ENCODE measurements at regions of chr3 and their contacts with region 1.

Region 1: GRCh38 chr3:136752422-136753325 is 496 bp upstream of the STAG1 start:
- DNase-seq: peak; percentile 98 to 99 (median 99)
- H3K4me3 ChIP-seq: peak overlapping the region; percentile 5 to 93 (median 52)
- H3K27ac ChIP-seq: peak overlapping the region; percentile 93 to 100 (median 100)
- H3K4me1 ChIP-seq: peaks cover 7 to 29% of the 10 kb centered on the region in 2 donors
- H3K27me3 ChIP-seq: no peaks in the 10 kb centered on the region
- CTCF ChIP-seq: peak in 2 of 6 experiments; percentile 17 to 36
- POLR2A ChIP-seq: peak; percentile 93 to 97

Region 2: DNA sequence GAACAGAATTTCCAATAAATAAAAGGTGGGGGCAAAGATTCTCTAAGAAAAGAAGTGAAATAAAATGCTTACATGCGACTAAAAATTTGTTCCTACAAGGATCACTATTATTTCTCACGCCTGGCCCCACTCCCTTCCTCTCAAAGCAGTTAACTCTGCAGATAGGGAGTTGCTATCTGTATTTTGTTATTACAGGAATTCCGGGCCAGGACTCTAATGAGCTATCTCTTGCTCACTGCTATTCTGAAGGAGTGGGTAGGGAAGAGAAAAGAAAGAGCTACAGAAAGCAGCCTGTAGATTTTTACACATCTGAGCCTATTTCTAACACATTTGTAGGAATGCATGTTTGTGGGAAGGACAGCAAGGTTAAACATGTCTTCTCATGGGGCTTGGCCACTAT is 362.1 kb before region 1 on chr3:
- intact Hi-C with region 1: loop called in 1 of 2 experiments (anchors 5 kb)
- DNase-seq: no peak
- H3K4me3 ChIP-seq: no peak overlapping the region
- H3K27ac ChIP-seq: no peak overlapping the region
- H3K4me1 ChIP-seq: no peaks in the 10 kb centered on the region
- H3K27me3 ChIP-seq: no peaks in the 10 kb centered on the region
- CTCF ChIP-seq: no peak
- POLR2A ChIP-seq: no peak

Region 3: DNA sequence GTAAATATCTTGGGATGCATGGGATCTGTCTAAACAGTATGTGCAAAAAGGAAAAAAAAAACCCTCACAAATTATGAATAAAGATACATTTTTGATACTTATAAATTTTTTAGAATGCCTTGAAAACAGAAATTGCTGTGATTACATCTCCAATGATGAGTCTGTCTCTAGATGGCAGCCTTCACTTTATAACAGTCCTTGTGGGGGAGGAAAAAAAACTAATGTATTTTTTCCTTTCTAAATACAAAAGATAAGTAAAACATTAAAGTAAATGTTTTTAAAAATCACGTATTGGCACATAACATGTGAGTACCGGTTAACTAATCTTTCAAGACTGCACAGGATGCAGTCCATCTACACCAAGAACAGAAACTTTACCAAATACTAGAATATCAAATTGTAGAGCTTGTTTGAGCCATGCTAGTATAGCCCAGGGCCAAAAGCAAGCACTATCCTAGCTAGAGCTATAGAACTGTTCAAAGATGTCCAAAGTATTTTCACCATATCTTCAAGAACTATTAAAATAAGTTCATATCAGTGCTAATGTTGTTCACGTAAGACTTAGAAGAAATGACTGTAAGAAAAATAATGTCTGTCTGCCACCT is 206.9 kb before region 1 on chr3:
- intact Hi-C with region 1: loop called (anchors 5 to 10 kb)
- DNase-seq: no peak
- H3K4me3 ChIP-seq: no peak overlapping the region
- H3K27ac ChIP-seq: no peak overlapping the region
- H3K4me1 ChIP-seq: peaks cover 4% of the 10 kb centered on the region in 2 donors
- H3K27me3 ChIP-seq: no peaks in the 10 kb centered on the region
- CTCF ChIP-seq: peak; percentile 10 to 48 (median 33)
- POLR2A ChIP-seq: no peak

Region 4: DNA sequence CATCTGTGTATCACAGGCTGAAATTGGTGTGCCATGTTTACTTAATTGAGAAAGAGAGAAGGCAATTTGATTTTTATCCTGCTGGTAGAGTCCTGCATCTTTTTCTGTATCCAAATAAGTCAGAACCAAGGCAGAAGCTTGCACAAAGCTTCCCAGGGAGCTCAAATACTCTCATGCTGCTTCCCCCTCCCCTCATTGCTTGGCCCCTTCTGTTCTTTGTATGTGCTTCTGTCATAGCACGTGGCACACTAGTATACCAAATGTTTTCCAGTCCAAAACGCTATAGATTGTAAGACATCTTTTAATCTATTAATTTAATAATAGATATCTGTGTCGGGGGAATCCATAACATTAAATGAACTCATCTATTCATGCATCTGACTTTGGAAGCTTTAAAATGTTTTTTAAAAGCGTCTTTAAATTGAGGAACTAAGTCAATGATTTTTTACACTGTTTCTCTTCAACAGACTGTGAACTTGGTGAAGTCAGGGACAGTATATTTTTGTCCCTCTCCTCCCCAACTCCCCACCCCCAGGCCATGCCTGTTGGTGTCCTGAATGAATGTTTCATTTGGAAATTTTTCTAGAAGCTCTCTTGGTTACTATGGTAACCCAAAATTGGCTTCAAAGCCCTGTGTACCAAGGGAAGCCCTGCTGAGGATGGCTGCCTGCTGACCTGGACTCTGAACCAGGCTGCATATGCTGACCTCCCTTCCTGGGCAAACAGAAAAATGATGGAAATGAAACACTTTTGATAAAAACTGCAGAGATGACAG is 40.1 kb after region 1 on chr3:
- intact Hi-C with region 1: no loop called
- DNase-seq: no peak
- H3K4me3 ChIP-seq: no peak overlapping the region
- H3K27ac ChIP-seq: no peak overlapping the region
- H3K4me1 ChIP-seq: no peaks in the 10 kb centered on the region
- H3K27me3 ChIP-seq: no peaks in the 10 kb centered on the region
- CTCF ChIP-seq: no peak
- POLR2A ChIP-seq: no peak

Region 5: DNA sequence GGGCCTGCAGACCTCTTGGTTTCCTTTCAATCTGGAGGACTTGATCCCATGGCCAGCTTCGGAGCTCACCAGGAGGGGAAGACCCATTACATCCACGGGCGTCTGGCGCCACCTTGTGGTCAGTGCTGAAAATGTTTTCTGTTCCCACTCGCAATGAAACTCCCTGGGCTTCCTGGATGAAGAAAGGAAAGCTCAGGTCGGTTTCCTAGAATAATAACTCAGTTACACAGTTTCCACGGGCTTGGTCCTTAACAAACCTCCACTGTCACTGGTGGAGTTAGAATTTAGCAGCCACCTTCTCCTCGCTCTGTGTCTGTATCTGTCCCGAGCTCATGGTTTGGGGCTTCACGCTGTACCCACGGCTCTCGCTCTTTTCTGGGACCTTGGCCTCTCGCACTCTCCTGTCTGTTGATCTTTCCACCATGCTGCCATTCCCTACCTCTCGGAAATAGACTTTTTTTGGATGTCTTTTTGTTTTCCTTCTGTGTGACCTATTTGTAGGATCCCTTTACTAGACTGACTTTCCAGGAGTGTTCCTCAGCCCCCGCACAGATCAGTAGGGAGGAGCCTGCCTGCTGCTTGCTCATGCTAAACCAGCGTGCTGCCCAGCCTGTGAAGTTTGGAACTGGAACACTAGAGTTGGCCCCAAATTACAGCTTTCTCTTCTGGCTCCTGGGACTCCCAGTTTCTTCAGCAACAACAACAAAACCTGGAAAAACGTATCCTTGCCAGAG is 261.4 kb after region 1 on chr3:
- intact Hi-C with region 1: loop called (anchors 2 to 10 kb)
- DNase-seq: peak; percentile 88 to 97 (median 93)
- H3K4me3 ChIP-seq: peak overlapping the region in 3 of 4 donors; percentile 6 to 77 (median 40)
- H3K27ac ChIP-seq: peak overlapping the region in 4 of 5 donors; percentile 70 to 87 (median 81)
- H3K4me1 ChIP-seq: peaks cover 0 to 3% of the 10 kb centered on the region in 2 donors
- H3K27me3 ChIP-seq: no peaks in the 10 kb centered on the region
- CTCF ChIP-seq: peak; percentile 85 to 98 (median 95)
- POLR2A ChIP-seq: no peak